CD4-positive, alpha-beta memory T cell (primary cell): ENCODE measurements at regions of chr7 and their contacts with region 1.

Region 1: DNA sequence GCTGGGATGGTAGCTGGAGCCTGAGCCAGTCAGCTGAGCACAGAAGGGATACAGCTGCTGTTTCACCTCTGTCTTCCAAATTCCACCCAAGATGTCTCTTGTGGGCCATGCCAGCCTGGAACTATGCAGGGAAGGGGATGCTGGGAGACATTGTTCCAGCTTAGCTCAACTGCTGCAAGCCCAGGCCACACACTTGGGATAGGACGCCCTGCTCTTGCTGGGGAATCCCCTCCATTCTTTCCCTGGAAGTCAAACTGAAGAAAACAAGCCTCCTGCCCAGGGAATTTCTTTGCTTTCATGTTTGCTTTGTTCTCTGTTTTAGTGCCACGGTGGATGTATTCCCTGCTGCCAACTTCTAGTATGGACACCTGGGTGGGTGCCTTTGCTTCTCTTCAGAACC is 55.2 kb upstream of the CDK13 start:
- DNase-seq: no peak
- H3K4me3 ChIP-seq: no peak overlapping the region
- H3K4me3 Mint-ChIP-seq: no peak overlapping the region
- H3K27ac ChIP-seq: no peak overlapping the region
- H3K27ac Mint-ChIP-seq: no peak overlapping the region
- H3K4me1 ChIP-seq: no peaks in the 10 kb centered on the region
- H3K4me1 Mint-ChIP-seq: peaks cover 0 to 2% (median 0%) of the 10 kb centered on the region in 4 donors
- H3K27me3 ChIP-seq: no peaks in the 10 kb centered on the region
- H3K27me3 Mint-ChIP-seq: peaks cover 0 to 11% of the 10 kb centered on the region in 2 donors

Region 2: DNA sequence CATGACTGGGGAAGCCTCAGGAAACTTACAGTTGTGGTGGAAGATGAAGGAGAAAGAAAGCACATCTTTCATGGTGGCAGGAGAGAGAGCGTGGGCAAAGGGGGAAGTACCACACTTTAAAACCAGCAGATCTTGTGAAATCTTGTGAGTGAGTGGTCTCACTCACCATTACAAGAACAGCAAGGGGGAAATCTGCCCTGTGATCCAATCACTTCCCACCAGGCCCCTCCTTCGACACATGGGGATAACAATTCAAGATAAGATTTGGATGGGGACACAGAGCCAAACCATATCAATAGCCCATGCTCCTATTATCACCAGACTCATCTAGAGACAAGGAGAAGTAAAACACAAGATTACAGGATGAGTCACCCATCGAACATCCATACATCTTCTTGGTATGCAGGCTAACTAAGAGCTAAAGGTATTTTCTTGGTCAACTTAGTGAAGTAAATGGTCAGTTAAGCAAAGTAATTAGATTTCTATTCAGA is 384.0 kb before region 1 on chr7:
- CTCF ChIA-PET with region 1: no interaction called
- POLR2A ChIA-PET with region 1: no interaction called
- intact Hi-C with region 1: no loop called
- DNase-seq: no peak
- H3K4me3 ChIP-seq: no peak overlapping the region
- H3K4me3 Mint-ChIP-seq: no peak overlapping the region
- H3K27ac ChIP-seq: no peak overlapping the region
- H3K27ac Mint-ChIP-seq: no peak overlapping the region
- H3K4me1 ChIP-seq: no peaks in the 10 kb centered on the region
- H3K4me1 Mint-ChIP-seq: peaks cover 0 to 7% (median 6%) of the 10 kb centered on the region in 4 donors
- H3K27me3 ChIP-seq: no peaks in the 10 kb centered on the region
- H3K27me3 Mint-ChIP-seq: peaks cover 4 to 5% of the 10 kb centered on the region in 2 donors

Region 3: GRCh38 chr7:39880556-39880955 is 14.3 kb before region 1 on chr7:
- CTCF ChIA-PET with region 1: interaction called, 75 read pairs
- POLR2A ChIA-PET with region 1: no interaction called
- intact Hi-C with region 1: no loop called
- DNase-seq: no peak
- H3K4me3 ChIP-seq: no peak overlapping the region
- H3K4me3 Mint-ChIP-seq: no peak overlapping the region
- H3K27ac ChIP-seq: no peak overlapping the region
- H3K27ac Mint-ChIP-seq: no peak overlapping the region
- H3K4me1 ChIP-seq: no peaks in the 10 kb centered on the region
- H3K4me1 Mint-ChIP-seq: no peaks in the 10 kb centered on the region
- H3K27me3 ChIP-seq: no peaks in the 10 kb centered on the region
- H3K27me3 Mint-ChIP-seq: peaks cover 16 to 22% of the 10 kb centered on the region in 2 donors

Region 4: GRCh38 chr7:39921506-39922175 is 26.7 kb after region 1 on chr7:
- CTCF ChIA-PET with region 1: interaction called, 15 read pairs
- POLR2A ChIA-PET with region 1: no interaction called
- intact Hi-C with region 1: no loop called
- DNase-seq: no peak
- H3K4me3 ChIP-seq: no peak overlapping the region
- H3K4me3 Mint-ChIP-seq: no peak overlapping the region
- H3K27ac ChIP-seq: no peak overlapping the region
- H3K27ac Mint-ChIP-seq: peak overlapping the region in 1 of 7 donors; percentile 7
- H3K4me1 ChIP-seq: no peaks in the 10 kb centered on the region
- H3K4me1 Mint-ChIP-seq: no peaks in the 10 kb centered on the region
- H3K27me3 ChIP-seq: no peaks in the 10 kb centered on the region
- H3K27me3 Mint-ChIP-seq: peaks cover 6 to 8% of the 10 kb centered on the region in 2 donors

Region 5: GRCh38 chr7:39987476-39988347 is 92.8 kb after region 1 on chr7:
- CTCF ChIA-PET with region 1: interaction called, 6 read pairs
- POLR2A ChIA-PET with region 1: no interaction called
- intact Hi-C with region 1: loop called (anchors 5 kb)
- DNase-seq: peak in 4 of 5 donors; percentile 29 to 42 (median 36)
- H3K4me3 ChIP-seq: no peak overlapping the region
- H3K4me3 Mint-ChIP-seq: peak overlapping the region in 3 of 8 donors; percentile 11 to 50 (median 40)
- H3K27ac ChIP-seq: no peak overlapping the region
- H3K27ac Mint-ChIP-seq: peak overlapping the region; percentile 42 to 87 (median 62)
- H3K4me1 ChIP-seq: peaks cover 42% of the 10 kb centered on the region
- H3K4me1 Mint-ChIP-seq: peaks cover 41 to 69% (median 55%) of the 10 kb centered on the region in 4 donors
- H3K27me3 ChIP-seq: no peaks in the 10 kb centered on the region
- H3K27me3 Mint-ChIP-seq: no peaks in the 10 kb centered on the region

Region 6: DNA sequence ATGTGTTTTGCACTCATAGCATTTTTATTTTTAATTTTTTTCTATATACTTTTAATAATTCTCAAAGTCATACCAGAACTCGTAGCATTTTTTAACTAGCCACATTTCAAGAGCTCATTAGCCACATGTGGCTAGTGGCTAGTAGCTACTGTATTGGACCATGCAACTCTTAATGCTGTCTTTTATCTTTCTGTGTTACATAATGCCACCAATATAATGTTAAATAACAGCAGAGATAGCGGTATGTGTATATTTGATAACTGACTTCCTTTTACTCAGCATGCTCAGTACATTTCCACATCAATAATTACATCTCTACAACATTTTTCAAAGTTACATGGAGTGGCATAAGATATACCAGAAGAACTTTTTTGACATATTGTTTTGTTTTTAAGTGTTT is 146.6 kb after region 1 on chr7:
- CTCF ChIA-PET with region 1: interaction called, 30 read pairs
- POLR2A ChIA-PET with region 1: no interaction called
- intact Hi-C with region 1: no loop called
- DNase-seq: no peak
- H3K4me3 ChIP-seq: no peak overlapping the region
- H3K4me3 Mint-ChIP-seq: no peak overlapping the region
- H3K27ac ChIP-seq: no peak overlapping the region
- H3K27ac Mint-ChIP-seq: peak overlapping the region in 1 of 7 donors; percentile 56
- H3K4me1 ChIP-seq: no peaks in the 10 kb centered on the region
- H3K4me1 Mint-ChIP-seq: peaks cover 8 to 14% (median 13%) of the 10 kb centered on the region in 4 donors
- H3K27me3 ChIP-seq: no peaks in the 10 kb centered on the region
- H3K27me3 Mint-ChIP-seq: no peaks in the 10 kb centered on the region

Region 7: DNA sequence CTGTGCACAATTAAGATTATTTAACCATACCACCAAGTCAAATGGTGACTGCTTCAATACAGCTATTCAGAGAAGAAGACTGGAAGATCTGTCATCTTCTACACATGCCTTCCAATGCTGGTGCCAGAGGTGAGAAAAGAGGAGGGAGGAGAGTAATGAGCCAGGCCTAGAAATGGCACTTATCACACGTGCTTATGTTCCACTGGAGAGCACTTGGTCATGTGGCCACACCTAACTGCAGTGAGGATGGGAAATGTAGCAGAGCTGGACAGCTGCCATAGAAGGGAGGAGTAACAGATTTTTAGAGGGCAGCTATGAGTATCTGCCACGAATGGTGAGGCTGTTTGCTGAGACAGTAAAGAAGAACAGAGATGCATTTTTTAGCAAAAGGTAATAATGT is 162.4 kb after region 1 on chr7:
- CTCF ChIA-PET with region 1: interaction called, 396 read pairs
- POLR2A ChIA-PET with region 1: interaction called, 8 read pairs
- intact Hi-C with region 1: loop called (anchors 1 kb)
- DNase-seq: no peak
- H3K4me3 ChIP-seq: no peak overlapping the region
- H3K4me3 Mint-ChIP-seq: no peak overlapping the region
- H3K27ac ChIP-seq: no peak overlapping the region
- H3K27ac Mint-ChIP-seq: peak overlapping the region in 4 of 7 donors; percentile 30 to 56 (median 42)
- H3K4me1 ChIP-seq: no peaks in the 10 kb centered on the region
- H3K4me1 Mint-ChIP-seq: peaks cover 6 to 19% (median 12%) of the 10 kb centered on the region in 4 donors
- H3K27me3 ChIP-seq: no peaks in the 10 kb centered on the region
- H3K27me3 Mint-ChIP-seq: no peaks in the 10 kb centered on the region